Sigmoid colon (tissue), 7 donors: ENCODE measurements at regions of chr3 and their contacts with region 1.

Region 1: GRCh38 chr3:45037734-45038455 is 11.8 kb downstream of the CLEC3B start:
- DNase-seq: peak; percentile 95
- H3K4me3 ChIP-seq: no peak overlapping the region
- H3K27ac ChIP-seq: peak overlapping the region in 3 of 4 donors; percentile 66 to 79 (median 75)
- H3K4me1 ChIP-seq: peaks cover 0 to 43% (median 29%) of the 10 kb centered on the region in 4 donors
- H3K27me3 ChIP-seq: no peaks in the 10 kb centered on the region
- CTCF ChIP-seq: peak; percentile 94 to 99 (median 94)
- EP300 ChIP-seq: no peak
- POLR2A ChIP-seq: no peak

Region 2: DNA sequence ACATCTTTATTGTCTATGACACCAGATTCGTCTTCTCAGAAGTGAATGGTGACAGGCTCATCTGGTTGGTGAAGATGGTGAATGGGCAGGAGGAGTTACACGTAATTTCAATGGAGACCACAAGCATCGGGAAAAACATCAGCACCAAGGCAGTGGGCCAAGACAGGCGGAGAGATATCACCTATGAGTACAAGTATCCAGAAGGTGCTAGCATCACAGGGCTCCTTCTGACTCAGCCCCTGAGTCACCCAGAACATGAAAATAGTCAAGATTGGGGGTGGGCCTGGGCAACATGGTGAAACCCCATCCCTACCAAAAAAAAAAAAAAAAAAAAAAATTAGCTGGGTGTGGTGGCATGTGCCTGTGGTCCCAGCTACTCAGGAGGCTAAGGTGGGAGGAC is 130.9 kb before region 1 on chr3:
- intact Hi-C with region 1: no loop called
- DNase-seq: no peak
- H3K4me3 ChIP-seq: no peak overlapping the region
- H3K27ac ChIP-seq: no peak overlapping the region
- H3K4me1 ChIP-seq: no peaks in the 10 kb centered on the region
- H3K27me3 ChIP-seq: peaks cover 0 to 21% (median 0%) of the 10 kb centered on the region in 3 donors
- CTCF ChIP-seq: no peak
- EP300 ChIP-seq: no peak
- POLR2A ChIP-seq: no peak

Region 3: DNA sequence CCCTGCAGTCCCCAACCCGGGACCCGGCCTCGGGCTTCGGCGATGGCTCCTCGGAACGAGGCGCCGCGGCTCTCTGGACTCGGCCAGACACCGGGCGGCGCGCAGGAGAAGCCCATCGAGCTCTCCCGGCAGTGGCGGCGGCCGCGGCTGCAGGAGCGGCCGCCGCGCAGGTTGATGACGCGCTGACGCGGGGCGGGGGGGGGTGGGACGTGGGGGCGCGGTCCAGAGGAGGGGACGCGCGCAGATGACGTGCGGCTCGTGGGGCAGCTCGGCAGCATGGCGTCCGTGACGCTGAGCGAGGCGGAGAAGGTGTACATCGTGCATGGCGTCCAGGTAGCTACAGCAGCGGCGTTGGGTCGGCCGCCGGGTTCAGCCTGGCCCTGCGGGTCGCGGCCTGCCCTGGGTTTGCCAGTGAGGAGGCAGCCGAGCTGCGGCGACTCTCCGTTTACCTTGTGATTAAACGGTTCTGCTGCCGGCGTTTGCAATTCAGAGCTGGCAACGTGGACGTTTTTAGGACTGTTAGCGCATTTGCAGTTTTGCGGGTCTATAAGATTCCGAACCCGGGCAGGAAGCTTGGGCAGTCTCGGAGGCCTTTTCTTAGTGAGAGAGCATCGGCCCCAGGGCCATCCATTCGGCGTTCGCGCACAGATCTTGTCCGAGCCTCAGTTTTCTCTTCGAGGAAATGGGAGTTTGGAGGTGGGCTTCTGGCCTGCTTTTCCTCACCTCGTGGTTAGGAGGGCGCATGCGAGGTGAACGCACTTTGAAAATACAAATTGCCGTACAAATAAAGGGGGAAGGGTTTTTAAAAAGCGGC is 61.7 kb before region 1 on chr3 and contains the starts of genes EXOSC7 and ZDHHC3:
- intact Hi-C with region 1: loop called (anchors 5 kb)
- DNase-seq: peak; percentile 93
- H3K4me3 ChIP-seq: peak within 1 kb of the TSS; percentile 76 to 98 (median 98)
- H3K27ac ChIP-seq: peak within 1 kb of the TSS; percentile 85 to 95 (median 94)
- H3K4me1 ChIP-seq: peaks cover 0 to 48% (median 30%) of the 10 kb centered on the region in 4 donors
- H3K27me3 ChIP-seq: no peaks in the 10 kb centered on the region
- CTCF ChIP-seq: no peak
- EP300 ChIP-seq: no peak
- POLR2A ChIP-seq: peak; percentile 18 to 44
- total RNA-seq, gene EXOSC7: 26.9 to 44.3 (median 34.9) TPM
- total RNA-seq, gene ZDHHC3: 43.2 to 62.9 (median 46.3) TPM

Region 4: GRCh38 chr3:45210308-45211041 is 172.6 kb after region 1 on chr3:
- intact Hi-C with region 1: loop called (anchors 1 kb)
- DNase-seq: peak; percentile 94
- H3K4me3 ChIP-seq: no peak overlapping the region
- H3K27ac ChIP-seq: peak overlapping the region; percentile 2 to 85 (median 80)
- H3K4me1 ChIP-seq: peaks cover 0 to 44% (median 34%) of the 10 kb centered on the region in 4 donors
- H3K27me3 ChIP-seq: no peaks in the 10 kb centered on the region
- CTCF ChIP-seq: peak; percentile 76 to 98 (median 92)
- EP300 ChIP-seq: no peak
- POLR2A ChIP-seq: no peak

Region 5: GRCh38 chr3:45224824-45225464 is 187.0 kb after region 1 on chr3:
- intact Hi-C with region 1: loop called (anchors 5 kb)
- DNase-seq: peak; percentile 82
- H3K4me3 ChIP-seq: peak overlapping the region; percentile 26 to 73 (median 58)
- H3K27ac ChIP-seq: peak overlapping the region in 3 of 4 donors; percentile 34 to 69 (median 63)
- H3K4me1 ChIP-seq: peaks cover 0 to 23% (median 18%) of the 10 kb centered on the region in 4 donors
- H3K27me3 ChIP-seq: peaks cover 0 to 4% (median 0%) of the 10 kb centered on the region in 3 donors
- CTCF ChIP-seq: peak in 1 of 4 experiments; percentile 52
- EP300 ChIP-seq: no peak
- POLR2A ChIP-seq: no peak

Region 6: GRCh38 chr3:45414823-45415222 is 376.9 kb after region 1 on chr3:
- intact Hi-C with region 1: loop called (anchors 5 kb)
- DNase-seq: no peak
- H3K4me3 ChIP-seq: no peak overlapping the region
- H3K27ac ChIP-seq: no peak overlapping the region
- H3K4me1 ChIP-seq: peaks cover 0 to 16% (median 13%) of the 10 kb centered on the region in 4 donors
- H3K27me3 ChIP-seq: no peaks in the 10 kb centered on the region
- CTCF ChIP-seq: no peak
- EP300 ChIP-seq: no peak
- POLR2A ChIP-seq: no peak

Region 7: DNA sequence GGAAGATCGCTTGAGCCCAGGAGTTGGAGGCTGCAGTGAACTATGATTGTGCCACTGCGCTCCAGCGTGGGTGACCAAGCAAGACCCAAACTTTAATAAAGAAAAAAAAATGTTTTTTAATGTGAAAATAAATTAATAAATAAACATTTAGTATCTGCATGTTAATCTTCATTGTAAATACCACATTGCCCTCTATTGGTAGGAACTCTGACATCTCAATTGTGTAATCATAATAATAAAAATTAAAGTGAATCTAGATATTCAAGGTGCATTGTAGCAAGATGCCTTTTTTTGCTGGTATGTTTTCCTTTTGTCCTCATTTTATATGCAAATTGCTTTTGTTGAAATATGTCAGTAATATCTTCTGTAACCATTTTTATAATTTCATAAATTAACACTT is 461.6 kb after region 1 on chr3:
- intact Hi-C with region 1: loop called (anchors 1 kb)
- DNase-seq: no peak
- H3K4me3 ChIP-seq: no peak overlapping the region
- H3K27ac ChIP-seq: no peak overlapping the region
- H3K4me1 ChIP-seq: peaks cover 0 to 12% (median 11%) of the 10 kb centered on the region in 4 donors
- H3K27me3 ChIP-seq: no peaks in the 10 kb centered on the region
- CTCF ChIP-seq: peak; percentile 35 to 46 (median 42)
- EP300 ChIP-seq: no peak
- POLR2A ChIP-seq: no peak

Region 8: GRCh38 chr3:45656575-45657363 is 618.9 kb after region 1 on chr3:
- intact Hi-C with region 1: loop called (anchors 5 kb)
- DNase-seq: peak; percentile 96
- H3K4me3 ChIP-seq: no peak overlapping the region
- H3K27ac ChIP-seq: no peak overlapping the region
- H3K4me1 ChIP-seq: peaks cover 0 to 33% (median 23%) of the 10 kb centered on the region in 4 donors
- H3K27me3 ChIP-seq: no peaks in the 10 kb centered on the region
- CTCF ChIP-seq: peak; percentile 86 to 96 (median 92)
- EP300 ChIP-seq: no peak
- POLR2A ChIP-seq: no peak